ENCODE measurements at regions of chr9 and their contacts with region 1.

Region 1: DNA sequence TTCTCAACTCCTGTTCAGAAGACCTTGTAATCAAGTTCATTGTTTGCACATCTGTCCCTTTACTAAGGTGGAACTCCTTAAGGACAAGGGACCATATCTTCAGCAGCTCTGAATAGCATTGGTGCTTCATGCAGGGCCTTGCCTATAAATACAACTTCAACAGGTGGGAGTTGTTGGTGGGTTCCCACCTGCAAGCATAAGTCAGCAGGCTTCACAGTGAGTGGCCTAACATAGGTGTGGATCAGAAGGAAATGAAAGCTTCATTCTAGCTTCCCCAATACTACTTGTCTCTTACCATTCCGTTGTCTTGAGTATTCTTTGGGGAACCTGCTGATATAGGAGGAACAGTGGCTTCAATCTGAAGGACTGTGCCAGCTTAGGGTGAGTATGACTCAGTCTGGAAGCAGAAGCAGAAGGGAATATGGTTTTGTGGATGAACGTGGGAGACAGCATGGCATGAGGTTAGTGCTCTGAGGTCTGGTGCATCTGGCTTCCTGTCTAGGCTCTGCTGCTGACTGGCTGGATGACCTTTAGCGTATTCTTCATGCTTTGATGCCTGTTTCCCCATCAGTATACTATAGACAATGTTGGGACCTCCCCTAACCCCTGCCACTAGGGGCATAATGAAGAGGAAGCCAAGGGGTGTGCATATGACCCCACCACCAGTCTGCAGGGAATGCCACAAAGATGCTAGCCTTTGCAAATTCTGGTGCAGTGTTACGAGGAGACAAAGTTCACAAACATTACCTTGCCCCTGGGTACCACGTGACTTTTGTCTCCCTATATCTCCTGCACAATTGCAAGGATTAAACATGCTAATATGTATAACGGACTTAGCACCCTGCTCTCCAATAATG is 192.3 kb downstream of the PALM2AKAP2 start:
- DNase-seq: no peak
- H3K4me3 ChIP-seq: no peak overlapping the region
- H3K27ac ChIP-seq: no peak overlapping the region
- H3K4me1 ChIP-seq: no peaks in the 10 kb centered on the region; a peak in 1 of 7 replicates
- H3K27me3 ChIP-seq: no peaks in the 10 kb centered on the region
- CTCF ChIP-seq: peak in 2 of 3 experiments; percentile 29 to 53; a peak in 3 of 4 replicates
- EP300 ChIP-seq: no peak
- POLR2A ChIP-seq: no peak
- RAD21 ChIP-seq: peak; percentile 5 to 29; a peak in 1 of 4 replicates

Region 2: GRCh38 chr9:109652964-109653363 is 319.3 kb before region 1 on chr9:
- CTCF ChIA-PET with region 1: no interaction called
- POLR2A ChIA-PET with region 1: no interaction called
- DNase-seq: no peak
- H3K4me3 ChIP-seq: no peak overlapping the region
- H3K27ac ChIP-seq: no peak overlapping the region
- H3K4me1 ChIP-seq: no peaks in the 10 kb centered on the region; a peak in 2 of 7 replicates
- H3K27me3 ChIP-seq: no peaks in the 10 kb centered on the region
- CTCF ChIP-seq: peak; percentile 39 to 64 (median 61)
- EP300 ChIP-seq: no peak
- POLR2A ChIP-seq: no peak
- RAD21 ChIP-seq: peak; percentile 79 to 82

Region 3: DNA sequence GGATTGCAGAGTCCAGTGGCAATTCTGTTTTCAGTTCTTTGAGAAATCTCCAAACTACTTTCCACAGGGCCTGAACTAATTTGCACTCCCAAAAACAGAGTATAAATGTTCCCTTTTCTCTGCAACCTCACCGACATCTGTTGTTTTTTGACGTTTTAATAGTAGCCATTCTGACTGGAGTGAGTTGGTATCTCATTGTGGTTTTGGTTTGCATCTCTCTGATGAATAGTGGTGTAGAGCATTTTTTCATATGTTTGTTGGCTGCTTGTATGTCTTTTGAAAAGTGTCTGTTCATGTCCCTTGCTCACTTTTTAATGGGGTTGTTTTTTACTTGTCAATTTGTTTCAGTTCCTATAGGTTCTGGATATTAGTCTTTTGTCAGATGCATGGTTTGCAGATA is 119.7 kb before region 1 on chr9:
- CTCF ChIA-PET with region 1: no interaction called
- POLR2A ChIA-PET with region 1: no interaction called
- DNase-seq: no peak
- H3K4me3 ChIP-seq: no peak overlapping the region
- H3K27ac ChIP-seq: no peak overlapping the region
- H3K4me1 ChIP-seq: peaks cover 0 to 5% (median 3%) of the 10 kb centered on the region in 4 experiments; a peak in 6 of 7 replicates
- H3K27me3 ChIP-seq: no peaks in the 10 kb centered on the region
- CTCF ChIP-seq: no peak
- EP300 ChIP-seq: no peak
- POLR2A ChIP-seq: no peak
- RAD21 ChIP-seq: no peak

Region 4: DNA sequence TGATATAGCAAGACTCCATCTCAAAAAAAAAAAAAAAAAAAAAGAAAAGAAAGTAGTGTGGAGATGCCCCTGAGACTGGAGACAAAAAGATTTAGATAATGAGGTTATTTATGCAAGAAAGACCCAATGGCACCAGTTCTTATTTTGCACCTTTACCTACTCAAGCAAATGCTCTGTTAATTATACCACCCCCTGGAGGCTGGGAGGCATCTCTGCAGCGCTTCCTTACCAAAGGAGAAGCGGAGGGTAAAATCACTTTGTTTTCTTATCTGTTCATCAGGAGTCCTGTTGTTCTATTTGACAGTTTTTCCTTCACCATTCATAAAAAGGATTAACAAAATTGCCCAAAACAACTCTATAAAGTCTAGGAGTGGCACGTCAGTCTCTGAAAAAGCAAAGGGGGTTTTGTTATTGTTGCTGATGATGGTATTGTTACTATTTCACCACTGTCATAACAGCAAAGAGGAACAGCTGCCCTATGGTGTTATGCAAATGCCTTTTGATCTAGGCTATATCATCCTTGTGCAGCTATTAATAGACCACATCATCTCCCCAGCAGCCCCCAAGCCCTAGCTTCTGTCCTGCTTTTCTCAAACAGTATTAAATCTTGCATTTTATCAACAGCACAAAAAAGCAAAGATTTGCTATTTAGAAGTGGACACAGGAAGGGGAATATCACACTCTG is 18.3 kb before region 1 on chr9:
- CTCF ChIA-PET with region 1: interaction called, 61 read pairs
- POLR2A ChIA-PET with region 1: no interaction called
- DNase-seq: no peak
- H3K4me3 ChIP-seq: no peak overlapping the region
- H3K27ac ChIP-seq: no peak overlapping the region
- H3K4me1 ChIP-seq: peaks cover 0 to 4% (median 2%) of the 10 kb centered on the region in 4 experiments; a peak in 4 of 7 replicates
- H3K27me3 ChIP-seq: no peaks in the 10 kb centered on the region
- CTCF ChIP-seq: peak; percentile 12 to 59 (median 32)
- EP300 ChIP-seq: no peak
- POLR2A ChIP-seq: no peak
- RAD21 ChIP-seq: 0 out of 4 replicates have a peak, but pooled peaks of 1 of the 2 experiments have one; percentile 5